ENCODE measurements at regions of chr6 and their contacts with region 1.

Region 1: GRCh38 chr6:27553123-27553904 is 80.4 kb upstream of the ZNF184 start:
- DNase-seq: no peak
- H3K4me3 Mint-ChIP-seq: peak overlapping the region; percentile 60
- H3K27ac Mint-ChIP-seq: peak overlapping the region; percentile 67
- H3K4me1 Mint-ChIP-seq: peaks cover 16% of the 10 kb centered on the region
- H3K27me3 Mint-ChIP-seq: peaks cover 68% of the 10 kb centered on the region

Region 2: GRCh38 chr6:27295301-27296081 is 257.8 kb before region 1 on chr6:
- intact Hi-C with region 1: loop called (anchors 5 kb)
- DNase-seq: no peak
- H3K4me3 Mint-ChIP-seq: no peak overlapping the region
- H3K27ac Mint-ChIP-seq: peak overlapping the region; percentile 32
- H3K4me1 Mint-ChIP-seq: no peaks in the 10 kb centered on the region
- H3K27me3 Mint-ChIP-seq: peaks cover 54% of the 10 kb centered on the region

Region 3: GRCh38 chr6:27592481-27593199 is 39.3 kb after region 1 on chr6:
- intact Hi-C with region 1: loop called (anchors 2 kb)
- DNase-seq: peak; percentile 51
- H3K4me3 Mint-ChIP-seq: no peak overlapping the region
- H3K27ac Mint-ChIP-seq: no peak overlapping the region
- H3K4me1 Mint-ChIP-seq: peaks cover 6% of the 10 kb centered on the region
- H3K27me3 Mint-ChIP-seq: peaks cover 24% of the 10 kb centered on the region

Region 4: GRCh38 chr6:27608916-27609883 is 55.9 kb after region 1 on chr6:
- intact Hi-C with region 1: loop called (anchors 5 kb)
- DNase-seq: no peak
- H3K4me3 Mint-ChIP-seq: no peak overlapping the region
- H3K27ac Mint-ChIP-seq: no peak overlapping the region
- H3K4me1 Mint-ChIP-seq: peaks cover 18% of the 10 kb centered on the region
- H3K27me3 Mint-ChIP-seq: peaks cover 28% of the 10 kb centered on the region

Region 5: GRCh38 chr6:28737750-28738395 is 1184.6 kb after region 1 on chr6:
- intact Hi-C with region 1: loop called (anchors 5 kb)
- DNase-seq: no peak
- H3K4me3 Mint-ChIP-seq: peak overlapping the region; percentile 12
- H3K27ac Mint-ChIP-seq: peak overlapping the region; percentile 54
- H3K4me1 Mint-ChIP-seq: peaks cover 10% of the 10 kb centered on the region
- H3K27me3 Mint-ChIP-seq: peaks cover 72% of the 10 kb centered on the region

Region 6: DNA sequence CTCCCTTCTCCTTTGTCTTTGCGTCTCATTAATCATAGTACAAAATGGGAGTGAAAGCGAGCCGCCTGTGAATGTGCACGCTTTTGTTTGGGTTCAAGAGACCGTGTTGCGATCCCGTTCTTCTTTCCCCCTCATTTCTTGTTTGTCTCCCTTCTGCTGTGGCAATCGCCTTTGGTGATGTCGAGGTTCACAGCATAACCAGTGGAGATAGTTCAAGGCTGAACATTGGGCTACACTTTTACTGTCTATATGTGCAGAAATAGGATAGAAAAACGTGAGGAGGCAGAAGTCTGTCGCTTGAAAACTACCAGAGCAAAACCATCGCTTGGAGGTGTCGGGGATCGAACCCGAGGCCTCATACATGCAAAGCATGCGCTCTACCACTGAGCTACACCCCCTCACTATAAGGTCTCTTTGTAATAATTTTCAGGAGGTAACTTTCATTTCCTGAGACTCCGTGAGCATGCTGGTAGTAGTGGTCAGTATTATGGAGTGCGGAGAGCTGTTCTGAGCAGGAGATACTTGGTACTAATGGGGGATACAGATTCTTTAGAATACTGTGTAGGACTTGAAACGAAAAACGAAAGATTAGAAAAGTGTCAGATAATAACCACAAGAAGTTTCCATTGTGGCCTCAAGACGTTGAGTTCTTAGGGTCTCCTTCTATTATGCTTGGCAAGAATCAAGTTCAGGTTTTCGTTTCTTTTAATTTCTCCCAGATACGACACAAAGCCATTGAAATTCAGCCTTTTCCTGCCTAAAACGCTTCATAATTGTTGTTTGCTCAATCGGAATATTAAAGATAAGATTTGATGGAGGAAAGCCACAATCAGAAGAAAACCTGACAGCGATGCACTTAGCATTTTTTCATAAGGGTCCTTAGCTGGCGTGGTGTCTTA is 1263.8 kb after region 1 on chr6:
- intact Hi-C with region 1: loop called (anchors 10 kb)
- DNase-seq: no peak
- H3K4me3 Mint-ChIP-seq: no peak overlapping the region
- H3K27ac Mint-ChIP-seq: no peak overlapping the region
- H3K4me1 Mint-ChIP-seq: peaks cover 11% of the 10 kb centered on the region
- H3K27me3 Mint-ChIP-seq: peaks cover 70% of the 10 kb centered on the region